ENCODE measurements at regions of chr15 and their contacts with region 1.

Region 1: DNA sequence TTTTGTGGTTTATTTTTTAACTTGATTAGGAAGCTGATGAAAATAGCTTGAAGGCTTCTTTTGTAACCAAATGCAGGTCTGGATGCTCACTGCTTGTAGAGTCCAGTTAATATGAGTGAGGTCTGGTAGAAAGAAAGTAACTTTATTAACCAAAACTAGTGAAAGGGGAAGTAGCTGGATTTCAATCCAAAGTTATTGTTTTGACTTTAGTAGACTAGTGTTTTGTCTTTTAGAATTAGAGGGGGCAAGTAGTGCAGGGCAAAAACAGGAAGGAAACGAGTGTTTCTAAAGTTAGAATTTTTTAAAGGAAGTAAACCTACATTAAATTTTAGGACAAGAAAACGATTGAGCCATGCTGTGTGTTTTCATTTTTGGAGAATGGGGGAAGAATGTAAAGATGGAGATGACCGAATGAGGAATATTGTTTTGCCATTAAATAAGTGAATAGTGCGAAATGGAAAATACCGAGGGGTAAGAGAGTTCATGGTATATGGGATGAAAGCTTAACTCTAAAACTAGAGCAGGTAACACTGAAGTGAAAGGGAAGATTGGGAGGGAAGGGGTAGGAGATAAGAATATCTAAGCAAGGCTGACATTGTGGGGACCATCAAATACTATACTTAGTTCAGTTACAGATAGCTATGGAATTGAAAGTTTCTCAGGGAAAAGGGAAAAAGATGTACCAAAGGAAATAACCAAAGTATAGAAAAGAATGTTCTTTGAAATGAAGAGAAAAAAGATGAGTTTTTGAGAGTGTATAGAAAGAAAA is 40.0 kb downstream of the USP3 start:
- DNase-seq: peak; percentile 30 to 84 (median 77)
- H3K4me3 ChIP-seq: peak overlapping the region in 5 of 7 experiments; percentile 22 to 56 (median 51)
- H3K27ac ChIP-seq: no peak overlapping the region
- H3K4me1 ChIP-seq: peaks cover 4 to 44% (median 27%) of the 10 kb centered on the region in 4 experiments
- H3K27me3 ChIP-seq: no peaks in the 10 kb centered on the region

Region 2: DNA sequence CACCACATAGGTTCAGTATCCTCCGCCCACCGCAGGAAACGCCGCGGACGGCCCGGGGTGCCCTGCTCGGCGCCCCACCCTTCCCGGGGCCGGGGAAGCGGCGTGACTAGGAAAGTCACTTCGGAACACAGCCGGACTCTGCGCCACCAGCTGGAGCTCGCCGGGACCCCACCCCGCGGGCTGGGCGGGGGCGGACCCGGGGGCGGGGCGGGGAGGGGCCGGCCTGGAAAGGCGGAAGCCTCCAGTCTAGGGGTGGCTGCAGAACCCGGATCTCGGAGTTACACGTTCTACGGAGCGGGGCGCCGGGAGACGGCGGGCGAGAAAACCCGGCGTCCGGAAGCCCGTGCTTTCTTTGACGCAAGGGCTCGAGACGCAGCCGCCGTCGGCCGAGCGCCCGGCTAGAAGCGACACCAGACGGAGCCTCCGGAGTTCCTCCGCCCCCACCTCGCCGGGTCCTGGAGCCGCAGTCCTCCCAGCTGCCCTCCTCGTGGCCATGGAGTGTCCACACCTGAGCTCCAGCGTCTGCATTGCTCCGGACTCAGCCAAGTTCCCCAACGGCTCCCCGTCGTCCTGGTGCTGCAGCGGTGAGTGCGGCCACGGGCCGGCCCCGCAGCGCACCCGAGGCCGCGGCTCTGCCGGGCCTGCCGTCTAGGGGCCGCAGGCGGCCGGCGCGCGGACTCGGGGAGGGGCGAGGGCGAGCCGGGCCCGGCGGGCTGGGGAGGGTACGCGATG is 40.0 kb before region 1 on chr15 and contains the start of gene USP3:
- CTCF ChIA-PET with region 1: interaction called, 10 read pairs
- POLR2A ChIA-PET with region 1: interaction called, 3 read pairs
- DNase-seq: peak; percentile 94 to 97 (median 96)
- H3K4me3 ChIP-seq: peak within 1 kb of the TSS; percentile 65 to 90 (median 85)
- H3K27ac ChIP-seq: peak within 1 kb of the TSS; percentile 55 to 90
- H3K4me1 ChIP-seq: peaks cover 28 to 70% (median 48%) of the 10 kb centered on the region in 4 experiments
- H3K27me3 ChIP-seq: peaks cover 0 to 3% (median 0%) of the 10 kb centered on the region in 5 experiments

Region 3: GRCh38 chr15:63531586-63531985 is 12.9 kb before region 1 on chr15:
- CTCF ChIA-PET with region 1: interaction called, 22 read pairs
- POLR2A ChIA-PET with region 1: interaction called, 5 read pairs
- DNase-seq: no peak
- H3K4me3 ChIP-seq: no peak overlapping the region
- H3K27ac ChIP-seq: no peak overlapping the region
- H3K4me1 ChIP-seq: peaks cover 0 to 7% (median 4%) of the 10 kb centered on the region in 4 experiments
- H3K27me3 ChIP-seq: no peaks in the 10 kb centered on the region